ENCODE measurements at regions of chr15 and their contacts with region 1.

Region 1: DNA sequence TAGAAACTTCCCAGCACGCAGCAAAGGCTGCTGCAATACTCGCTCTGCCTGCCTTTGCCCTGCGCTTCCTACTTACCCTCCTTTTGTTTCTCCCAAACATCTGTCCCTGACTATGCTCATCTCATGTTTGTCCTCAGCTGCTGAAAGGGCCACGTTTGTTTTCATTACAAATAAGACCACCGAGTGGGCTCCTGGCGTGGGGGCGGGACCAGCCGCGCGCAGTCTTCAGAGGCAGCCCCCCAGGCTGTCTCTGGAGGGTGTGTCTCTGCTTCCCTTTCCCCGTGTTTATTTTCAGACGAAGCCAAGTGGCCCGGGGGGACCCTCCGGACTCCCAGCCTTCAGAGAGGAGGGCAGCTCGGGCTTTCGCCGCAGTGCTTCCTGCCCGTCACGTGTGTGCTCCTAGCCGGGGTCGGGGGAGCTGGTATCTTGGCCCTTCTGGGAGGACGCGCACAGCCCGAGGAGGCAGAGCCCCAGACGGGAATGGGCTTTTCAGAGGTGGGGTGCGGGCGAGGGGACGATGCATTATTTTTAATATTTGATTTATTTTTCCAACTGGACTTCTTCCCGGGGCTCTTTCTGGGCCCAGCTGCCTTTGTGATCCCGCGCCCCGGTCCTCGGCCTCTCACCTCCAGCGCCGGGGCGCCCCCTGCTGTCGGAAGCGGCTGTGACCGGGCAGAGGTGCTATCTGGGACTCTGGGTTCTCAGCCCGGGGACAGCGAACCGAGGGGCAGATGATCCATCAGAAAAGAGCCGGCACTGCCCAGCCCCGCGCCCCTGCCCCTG is 70.0 kb upstream of the CGNL1 start:
- DNase-seq: no peak
- H3K4me3 ChIP-seq: peak overlapping the region; percentile 58
- CTCF ChIP-seq: peak; percentile 91

Region 2: DNA sequence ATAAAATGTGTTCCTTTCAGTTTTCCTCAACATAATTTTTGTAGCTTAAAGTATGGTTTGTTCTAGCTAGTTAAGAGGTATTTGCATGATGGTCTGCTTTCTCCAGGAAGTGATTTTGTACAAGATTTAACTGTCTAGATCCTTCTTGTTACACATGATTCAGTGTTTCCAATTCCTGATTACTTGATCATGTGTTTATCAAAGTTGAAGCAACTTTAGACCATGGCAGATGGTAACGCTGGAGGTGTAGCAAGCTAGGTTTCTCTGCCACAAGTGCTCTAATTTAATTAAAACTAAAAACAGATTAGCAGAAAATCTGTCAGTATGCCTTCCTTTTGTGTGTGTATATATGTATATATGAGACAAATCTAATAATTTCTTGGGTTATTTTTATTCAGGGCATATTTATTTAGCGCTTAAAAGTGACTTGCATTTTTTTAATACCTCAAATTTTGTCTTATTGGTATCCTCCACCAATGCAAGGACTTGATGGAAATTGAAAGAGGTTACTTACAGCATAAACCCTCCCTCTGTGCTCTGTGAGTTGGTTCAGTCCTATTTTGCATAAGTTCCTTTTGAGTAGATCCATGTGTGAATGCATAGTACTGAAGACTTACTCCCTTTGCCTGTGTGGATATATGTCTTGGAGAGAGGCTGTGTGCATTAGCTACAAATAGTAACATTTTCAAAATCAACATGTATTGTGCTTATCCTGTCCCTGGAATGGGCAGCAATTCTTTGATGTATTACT is 87.4 kb before region 1 on chr15:
- CTCF ChIA-PET with region 1: interaction called, 27 read pairs
- POLR2A ChIA-PET with region 1: no interaction called
- DNase-seq: peak; percentile 93
- H3K4me3 ChIP-seq: peak overlapping the region; percentile 62
- CTCF ChIP-seq: no peak

Region 3: DNA sequence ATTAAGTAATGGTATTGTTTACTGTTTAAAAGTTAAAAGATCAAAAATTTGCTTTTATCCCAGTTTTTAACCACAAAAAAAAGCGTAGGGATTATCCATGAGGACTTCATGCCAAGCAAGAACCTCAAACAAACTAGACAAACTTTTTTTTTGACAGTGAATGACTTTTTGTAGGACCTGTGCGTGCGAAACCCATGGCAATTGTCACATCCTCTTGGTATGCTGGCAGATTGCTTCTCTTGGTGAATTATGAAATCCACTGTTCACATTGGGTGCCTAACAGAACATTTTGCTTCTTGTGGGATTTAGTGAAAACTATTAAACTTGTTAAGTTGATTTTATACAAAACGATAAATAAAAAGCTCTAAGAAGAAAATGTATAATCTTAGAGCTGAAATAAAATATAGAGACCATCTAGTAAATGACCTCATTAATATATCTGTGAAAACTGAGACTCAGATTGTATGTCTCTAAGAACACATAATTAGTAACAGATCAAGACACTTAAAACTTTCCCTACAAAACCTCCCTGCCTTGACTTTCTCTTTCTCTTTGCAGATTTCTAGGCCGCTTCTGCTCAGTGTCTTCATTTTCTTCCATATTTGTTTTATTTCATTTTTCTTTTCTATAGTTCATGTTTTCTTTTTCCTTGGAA is 17.3 kb before region 1 on chr15:
- CTCF ChIA-PET with region 1: interaction called, 15 read pairs
- POLR2A ChIA-PET with region 1: no interaction called
- DNase-seq: no peak
- H3K4me3 ChIP-seq: no peak overlapping the region
- CTCF ChIP-seq: no peak

Region 4: GRCh38 chr15:57323806-57324589 is 17.6 kb after region 1 on chr15:
- CTCF ChIA-PET with region 1: interaction called, 13 read pairs
- POLR2A ChIA-PET with region 1: no interaction called
- DNase-seq: no peak
- H3K4me3 ChIP-seq: no peak overlapping the region
- CTCF ChIP-seq: no peak

Region 5: DNA sequence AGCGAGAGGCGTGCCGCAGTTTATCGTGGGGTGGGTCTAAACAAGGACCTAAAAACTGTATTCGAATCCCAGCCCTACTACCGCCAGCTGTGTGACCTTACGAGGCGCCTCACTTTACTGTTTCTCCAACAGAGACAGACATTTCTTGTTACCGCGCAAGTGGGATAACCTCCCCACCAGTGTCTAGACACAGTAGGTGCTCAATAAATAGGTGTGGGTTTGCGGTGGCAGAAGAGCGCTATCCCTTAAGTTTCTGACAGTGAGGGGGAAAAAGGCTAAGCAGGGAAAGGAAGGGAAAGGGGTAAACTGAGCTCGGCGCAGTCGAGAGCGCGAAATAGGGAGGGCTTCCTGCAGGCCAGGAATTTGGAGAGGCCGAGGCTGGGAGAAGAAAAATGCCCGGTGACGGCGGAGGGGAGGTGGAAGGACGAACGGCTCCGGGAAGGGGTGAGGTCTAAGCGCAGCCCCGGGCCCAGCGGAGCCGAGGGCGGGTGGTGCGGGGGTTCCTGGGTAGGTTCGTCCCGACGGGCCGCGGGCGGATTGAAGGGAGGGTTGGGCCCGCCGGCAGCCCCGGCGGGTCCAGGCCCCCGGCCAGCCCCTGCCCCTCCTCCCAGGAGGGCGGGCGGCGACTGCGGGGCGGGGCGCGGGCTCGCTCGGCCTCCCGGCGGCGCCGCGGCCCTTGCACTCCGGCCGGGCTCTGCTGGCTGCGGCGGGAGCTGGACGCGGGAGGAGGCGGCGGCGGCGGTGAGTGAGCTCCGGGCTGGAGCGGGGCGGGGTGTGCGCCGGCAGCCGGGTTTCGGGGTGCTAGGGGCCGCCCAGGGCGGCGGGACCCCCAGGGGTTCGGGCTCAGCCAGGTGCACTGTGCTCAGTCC is 69.7 kb after region 1 on chr15 and contains the start of gene CGNL1:
- CTCF ChIA-PET with region 1: no interaction called
- POLR2A ChIA-PET with region 1: no interaction called
- DNase-seq: no peak
- H3K4me3 ChIP-seq: peak within 1 kb of the TSS; percentile 58
- CTCF ChIP-seq: no peak

Measured in AG04449 (cell line).